Heart left ventricle (tissue), 16 donors: ENCODE measurements at regions of chr5 and their contacts with region 1.

Region 1: GRCh38 chr5:23528677-23529076 is 21.3 kb downstream of the PRDM9 start:
- DNase-seq: no peak
- ATAC-seq: no peak
- H3K4me3 ChIP-seq: no peak overlapping the region
- H3K27ac ChIP-seq: no peak overlapping the region
- H3K4me1 ChIP-seq: no peaks in the 10 kb centered on the region
- H3K27me3 ChIP-seq: no peaks in the 10 kb centered on the region
- CTCF ChIP-seq: no peak
- POLR2A ChIP-seq: no peak

Region 2: DNA sequence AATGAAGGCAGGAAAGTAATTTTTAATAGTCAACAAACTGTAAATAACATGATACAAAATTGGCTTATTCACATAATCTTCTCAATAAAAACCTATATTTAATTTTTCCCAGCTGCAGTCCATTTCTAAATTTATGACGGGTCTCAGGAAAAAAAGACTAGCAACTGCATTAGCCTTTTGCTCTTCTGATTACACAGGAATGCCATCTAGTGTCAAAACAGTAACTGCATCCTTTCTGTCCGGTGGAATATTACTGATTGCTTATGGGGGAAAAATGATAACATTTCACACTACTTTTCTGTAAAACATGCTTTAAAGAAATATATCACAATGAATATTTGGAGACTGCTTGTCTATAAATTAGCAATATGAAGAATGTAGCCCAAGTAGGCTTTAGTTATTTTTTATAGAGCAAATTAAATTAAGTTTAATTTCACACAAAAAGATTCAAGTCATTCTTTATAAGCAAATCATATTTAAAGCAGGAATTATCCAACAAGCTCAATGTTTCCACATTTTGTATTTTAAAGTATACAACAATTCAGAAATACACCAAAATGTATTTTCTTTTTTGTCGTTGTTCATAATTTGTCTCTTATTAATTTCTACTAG is 581.4 kb after region 1 on chr5:
- intact Hi-C with region 1: loop called in 1 of 10 experiments (anchors 10 kb)
- DNase-seq: no peak
- ATAC-seq: no peak
- H3K4me3 ChIP-seq: no peak overlapping the region
- H3K27ac ChIP-seq: no peak overlapping the region
- H3K4me1 ChIP-seq: no peaks in the 10 kb centered on the region
- H3K27me3 ChIP-seq: no peaks in the 10 kb centered on the region
- CTCF ChIP-seq: peak in 10 of 12 donors; percentile 9 to 53 (median 34)
- POLR2A ChIP-seq: no peak